Right ventricle myocardium inferior (tissue), 1 donor: ENCODE measurements at regions of chr19 and their contacts with region 1.

Region 1: DNA sequence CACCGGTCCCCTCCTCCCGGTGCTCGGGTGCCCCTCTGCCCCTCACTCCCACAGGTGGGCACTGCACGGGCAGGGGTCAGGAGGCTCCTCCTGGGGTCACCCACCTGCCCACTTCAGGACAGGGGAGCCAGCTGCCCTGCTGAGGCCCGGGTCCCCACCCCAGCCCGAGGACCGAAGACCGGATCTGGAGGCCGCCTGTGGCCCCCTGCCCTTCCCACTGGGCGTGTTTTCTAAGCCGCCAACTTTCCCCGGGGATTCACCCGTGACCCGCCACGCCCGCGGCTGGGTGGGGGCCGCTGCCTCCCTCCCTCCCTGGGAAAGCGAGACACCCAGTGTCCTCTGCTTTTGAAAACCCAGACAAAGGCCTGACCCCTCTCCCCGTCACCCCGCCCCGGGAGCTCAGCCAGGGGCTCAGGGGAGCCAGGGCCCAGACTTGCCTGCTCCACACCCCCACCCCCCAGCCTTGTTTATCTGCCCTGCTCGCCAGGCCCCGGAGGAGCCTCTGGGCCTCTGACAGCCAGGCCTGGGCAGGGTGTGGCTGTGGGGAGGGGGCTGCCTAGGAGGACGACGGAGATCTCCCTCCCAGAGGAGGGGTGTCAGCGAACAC is 1.3 kb downstream of the PALM start:
- DNase-seq: peak; percentile 80
- ATAC-seq: peak; percentile 61

Region 2: GRCh38 chr19:680287-681028 is 29.6 kb before region 1 on chr19:
- intact Hi-C with region 1: loop called (anchors 5 kb)
- DNase-seq: peak; percentile 100
- ATAC-seq: peak; percentile 89

Region 3: GRCh38 chr19:728011-728410 is 17.9 kb after region 1 on chr19:
- intact Hi-C with region 1: loop called (anchors 1 kb)
- DNase-seq: peak; percentile 88
- ATAC-seq: peak; percentile 83

Region 4: DNA sequence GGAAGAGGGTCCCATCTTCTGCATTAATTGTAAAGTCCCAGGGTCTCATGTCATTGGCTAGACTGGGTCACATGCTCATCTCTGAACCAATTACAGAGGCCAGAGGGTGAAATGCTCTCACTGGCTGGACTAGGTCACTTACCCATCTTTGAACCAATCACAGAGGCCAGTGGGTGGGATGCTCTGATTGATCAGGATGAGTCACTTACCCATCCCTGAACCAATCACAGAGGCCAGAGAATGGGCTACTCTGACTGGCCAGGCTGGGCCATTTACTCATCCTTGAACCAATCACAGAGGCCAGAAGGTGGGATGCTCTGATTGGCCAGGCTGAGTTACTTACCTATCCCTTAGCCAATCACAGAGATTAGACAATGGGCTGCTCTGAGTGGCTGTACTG is 46.2 kb after region 1 on chr19:
- intact Hi-C with region 1: no loop called
- DNase-seq: no peak
- ATAC-seq: no peak

Region 5: GRCh38 chr19:768424-768823 is 58.4 kb after region 1 on chr19:
- intact Hi-C with region 1: no loop called
- DNase-seq: peak; percentile 13
- ATAC-seq: no peak